ENCODE measurements at regions of chr1 and their contacts with region 1.

Region 1: DNA sequence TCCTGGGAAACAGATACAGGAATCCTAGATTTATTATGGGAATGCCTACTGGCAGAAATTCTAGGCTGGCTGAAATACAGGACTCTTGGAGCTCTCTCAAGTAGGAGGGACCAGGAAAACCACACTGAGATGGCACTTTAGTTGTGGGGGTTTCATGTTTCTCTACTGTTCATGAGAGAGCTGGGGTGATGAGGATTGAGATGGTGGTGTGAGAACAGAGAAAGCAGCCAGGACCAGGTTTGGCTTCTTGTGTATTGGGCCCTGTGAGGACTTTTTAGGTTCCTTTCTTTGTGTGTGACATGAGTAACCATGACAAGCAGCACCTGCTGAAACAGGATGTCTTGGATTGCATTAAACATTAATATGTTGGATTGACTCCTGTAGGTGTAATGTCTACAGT is 4.9 kb downstream of the ARID1A start:
- DNase-seq: no peak
- H3K4me3 Mint-ChIP-seq: no peak overlapping the region
- H3K27ac Mint-ChIP-seq: no peak overlapping the region
- H3K4me1 Mint-ChIP-seq: peaks cover 7% of the 10 kb centered on the region
- H3K27me3 Mint-ChIP-seq: no peaks in the 10 kb centered on the region

Region 2: GRCh38 chr1:25922970-25923552 is 777.6 kb before region 1 on chr1:
- intact Hi-C with region 1: no loop called
- DNase-seq: peak; percentile 59
- H3K4me3 Mint-ChIP-seq: peak overlapping the region; percentile 82
- H3K27ac Mint-ChIP-seq: no peak overlapping the region
- H3K4me1 Mint-ChIP-seq: peaks cover 21% of the 10 kb centered on the region
- H3K27me3 Mint-ChIP-seq: peaks cover 40% of the 10 kb centered on the region

Region 3: DNA sequence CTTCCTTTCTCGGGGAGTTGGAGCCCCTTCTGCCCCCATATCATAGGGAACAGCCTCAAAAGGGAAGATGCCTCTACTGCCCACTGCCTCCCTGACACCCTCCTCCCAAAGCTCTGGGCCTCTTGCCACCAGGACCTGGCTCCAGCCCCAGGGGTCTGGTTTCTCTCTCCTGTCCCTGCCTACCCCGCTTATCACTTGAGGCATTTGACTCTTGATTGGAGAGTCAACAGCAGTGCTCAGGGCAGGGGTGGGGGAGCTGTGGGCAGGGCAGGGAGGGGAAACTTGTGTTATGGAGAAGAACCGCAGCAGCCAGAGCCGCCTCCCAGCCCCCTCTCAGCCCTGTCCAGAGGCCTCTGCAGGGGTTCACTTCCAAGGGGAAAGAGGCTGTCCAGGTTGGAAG is 633.9 kb before region 1 on chr1:
- intact Hi-C with region 1: no loop called
- DNase-seq: no peak
- H3K4me3 Mint-ChIP-seq: no peak overlapping the region
- H3K27ac Mint-ChIP-seq: no peak overlapping the region
- H3K4me1 Mint-ChIP-seq: no peaks in the 10 kb centered on the region
- H3K27me3 Mint-ChIP-seq: peaks cover 32% of the 10 kb centered on the region

Region 4: GRCh38 chr1:26744075-26744959 is 43.6 kb after region 1 on chr1:
- intact Hi-C with region 1: loop called (anchors 1 kb)
- DNase-seq: peak; percentile 95
- H3K4me3 Mint-ChIP-seq: peak overlapping the region; percentile 72
- H3K27ac Mint-ChIP-seq: peak overlapping the region; percentile 89
- H3K4me1 Mint-ChIP-seq: peaks cover 75% of the 10 kb centered on the region
- H3K27me3 Mint-ChIP-seq: no peaks in the 10 kb centered on the region